ENCODE measurements at regions of chr9 and their contacts with region 1.

Region 1: GRCh38 chr9:129796029-129796910 is 6.7 kb upstream of the TOR1B start:
- DNase-seq: no peak
- H3K4me3 Mint-ChIP-seq: no peak overlapping the region
- H3K27ac Mint-ChIP-seq: no peak overlapping the region
- H3K4me1 Mint-ChIP-seq: no peaks in the 10 kb centered on the region
- H3K27me3 Mint-ChIP-seq: peaks cover 39% of the 10 kb centered on the region
- CTCF ChIP-seq: no peak

Region 2: DNA sequence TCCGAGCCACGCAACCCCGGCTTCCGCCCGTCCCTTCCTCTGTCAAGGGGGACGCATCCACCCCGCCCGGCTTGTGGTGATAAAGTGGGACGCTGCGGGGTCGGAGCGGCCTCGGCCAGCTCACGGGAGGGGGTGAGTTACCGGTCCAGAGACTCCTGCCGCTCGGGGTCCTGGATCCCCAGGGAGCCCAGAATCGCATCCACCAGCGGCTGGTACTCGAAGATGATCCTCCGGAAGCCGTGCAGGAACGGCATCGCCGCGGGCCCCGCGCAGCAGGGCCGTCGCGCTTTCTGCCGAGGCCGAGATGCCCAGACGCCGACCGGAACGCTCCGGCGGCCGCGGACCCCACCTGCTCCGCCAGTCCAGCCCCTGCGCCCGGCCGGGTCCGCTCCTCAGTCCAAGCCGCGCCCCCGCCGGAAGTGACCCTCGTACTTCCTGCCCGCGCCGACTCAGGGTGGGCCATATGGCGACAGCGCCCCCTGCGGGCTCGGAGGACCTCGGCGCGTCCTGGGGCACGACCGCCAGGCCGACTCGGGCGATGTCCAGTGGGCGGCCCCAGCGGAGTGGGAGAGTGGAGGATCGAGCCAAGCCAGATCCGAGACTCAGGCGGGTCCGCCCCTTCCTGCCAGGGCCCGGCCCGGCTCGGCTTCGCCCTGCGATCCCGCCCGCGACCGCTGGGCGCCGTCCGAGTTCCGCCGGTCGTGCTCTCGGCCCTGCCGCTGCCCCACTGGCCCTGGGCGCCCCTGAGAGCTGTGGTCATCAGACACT is 154.3 kb before region 1 on chr9 and contains the start of gene ASB6:
- CTCF ChIA-PET with region 1: interaction called, 45 read pairs
- POLR2A ChIA-PET with region 1: no interaction called
- intact Hi-C with region 1: no loop called
- DNase-seq: peak; percentile 93
- H3K4me3 Mint-ChIP-seq: peak within 1 kb of the TSS; percentile 87
- H3K27ac Mint-ChIP-seq: peak within 1 kb of the TSS; percentile 79
- H3K4me1 Mint-ChIP-seq: peaks cover 12% of the 10 kb centered on the region
- H3K27me3 Mint-ChIP-seq: no peaks in the 10 kb centered on the region
- CTCF ChIP-seq: peak; percentile 97
- total RNA-seq, gene ASB6: 14.4 TPM in 2 replicates

Region 3: GRCh38 chr9:129726322-129727160 is 69.7 kb before region 1 on chr9:
- CTCF ChIA-PET with region 1: interaction called, 33 read pairs
- POLR2A ChIA-PET with region 1: interaction called, 9 read pairs
- intact Hi-C with region 1: loop called (anchors 2 kb)
- DNase-seq: peak; percentile 79
- H3K4me3 Mint-ChIP-seq: no peak overlapping the region
- H3K27ac Mint-ChIP-seq: no peak overlapping the region
- H3K4me1 Mint-ChIP-seq: no peaks in the 10 kb centered on the region
- H3K27me3 Mint-ChIP-seq: no peaks in the 10 kb centered on the region
- CTCF ChIP-seq: peak; percentile 92